PC-3 (cell line): ENCODE measurements at regions of chr1 and their contacts with region 1.

Region 1: DNA sequence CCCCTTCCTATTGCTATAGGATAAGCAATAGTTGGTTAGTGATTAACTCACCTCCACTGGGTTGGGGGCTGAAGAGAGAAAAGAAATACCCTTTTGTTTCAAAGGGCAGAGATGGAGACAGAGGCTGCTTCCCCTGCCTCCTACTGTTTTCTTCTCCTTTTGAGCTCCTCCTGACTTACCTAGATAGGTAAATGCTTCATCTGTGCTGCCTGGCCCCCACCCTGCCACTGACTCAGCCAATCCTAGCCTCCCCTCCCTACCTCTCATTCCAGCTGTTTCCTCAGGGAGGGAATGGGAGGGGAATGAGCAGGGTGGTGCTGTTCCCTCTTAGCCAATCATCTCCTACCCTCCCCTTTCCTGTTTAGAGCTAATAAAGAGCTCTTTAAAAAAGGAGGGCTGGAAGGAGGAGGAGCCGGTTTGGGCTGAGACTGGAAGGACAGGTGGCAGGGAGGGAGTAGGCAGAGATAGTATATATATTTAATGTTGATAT is at the start of gene C1orf116:
- DNase-seq: peak; percentile 99
- ATAC-seq: peak; percentile 63
- H3K4me3 ChIP-seq: peak within 1 kb of the TSS; percentile 69
- H3K27ac ChIP-seq: peak within 1 kb of the TSS; percentile 95
- H3K4me1 ChIP-seq: peaks cover 88% of the 10 kb centered on the region
- H3K27me3 ChIP-seq: no peaks in the 10 kb centered on the region
- CTCF ChIP-seq: no peak
- total RNA-seq, gene C1orf116: 34.9 and 36.2 TPM in 2 replicates

Region 2: DNA sequence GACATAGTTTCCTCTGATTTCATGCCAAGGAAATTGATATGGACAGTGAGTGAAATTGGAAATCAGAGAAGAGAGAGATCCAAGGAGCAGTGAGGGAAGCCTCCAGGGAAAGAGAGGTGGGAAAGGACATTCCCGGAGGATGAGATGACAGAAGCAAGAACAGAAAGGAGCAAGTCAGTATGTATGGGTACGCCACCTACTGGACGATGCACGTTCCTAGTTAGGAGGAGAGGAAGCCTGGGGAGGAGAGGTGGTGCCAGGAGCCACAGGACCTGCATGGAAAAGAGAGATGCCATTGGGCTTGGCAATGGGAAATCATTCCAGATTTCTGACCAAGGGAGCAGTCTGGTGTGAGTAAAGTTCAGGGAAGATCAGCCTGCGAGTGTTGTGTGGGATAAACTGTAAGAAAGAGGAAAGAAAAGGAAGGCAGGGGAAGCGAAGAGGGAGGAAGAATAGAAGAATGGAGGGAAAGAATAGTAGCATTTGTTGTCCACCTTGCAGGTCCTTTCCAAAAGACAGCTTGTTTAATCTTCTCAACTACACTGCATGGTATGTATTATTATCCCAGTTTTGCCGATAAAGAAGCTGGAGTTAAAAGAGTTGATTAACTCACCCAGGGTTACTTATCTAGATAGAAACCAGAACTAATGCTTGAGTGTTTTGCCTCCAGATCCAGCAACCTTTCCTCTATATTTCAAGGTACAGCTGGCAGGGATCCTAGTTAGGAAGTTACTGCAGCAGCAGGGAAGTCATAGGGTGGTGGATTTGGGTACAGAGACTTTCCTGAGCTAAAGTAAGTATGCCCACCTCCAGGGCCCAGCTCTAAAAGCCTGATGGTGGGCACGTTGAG is 27.4 kb before region 1 on chr1:
- CTCF ChIA-PET with region 1: interaction called, 9 read pairs
- POLR2A ChIA-PET with region 1: interaction called, 37 read pairs
- intact Hi-C with region 1: loop called (anchors 1 kb)
- DNase-seq: peak; percentile 97
- ATAC-seq: peak; percentile 33
- H3K4me3 ChIP-seq: no peak overlapping the region
- H3K27ac ChIP-seq: peak overlapping the region; percentile 92
- H3K4me1 ChIP-seq: peaks cover 82% of the 10 kb centered on the region
- H3K27me3 ChIP-seq: no peaks in the 10 kb centered on the region
- CTCF ChIP-seq: peak; percentile 98

Region 3: GRCh38 chr1:207047505-207047904 is 14.9 kb after region 1 on chr1:
- CTCF ChIA-PET with region 1: interaction called, 5 read pairs
- POLR2A ChIA-PET with region 1: interaction called, 81 read pairs
- intact Hi-C with region 1: loop called (anchors 1 kb)
- DNase-seq: peak; percentile 25
- ATAC-seq: no peak
- H3K4me3 ChIP-seq: peak overlapping the region; percentile 78
- H3K27ac ChIP-seq: 0 out of 2 replicates have a peak overlapping the region, but pooled peaks have one; percentile 0
- H3K4me1 ChIP-seq: peaks cover 67% of the 10 kb centered on the region
- H3K27me3 ChIP-seq: no peaks in the 10 kb centered on the region
- CTCF ChIP-seq: no peak

Region 4: DNA sequence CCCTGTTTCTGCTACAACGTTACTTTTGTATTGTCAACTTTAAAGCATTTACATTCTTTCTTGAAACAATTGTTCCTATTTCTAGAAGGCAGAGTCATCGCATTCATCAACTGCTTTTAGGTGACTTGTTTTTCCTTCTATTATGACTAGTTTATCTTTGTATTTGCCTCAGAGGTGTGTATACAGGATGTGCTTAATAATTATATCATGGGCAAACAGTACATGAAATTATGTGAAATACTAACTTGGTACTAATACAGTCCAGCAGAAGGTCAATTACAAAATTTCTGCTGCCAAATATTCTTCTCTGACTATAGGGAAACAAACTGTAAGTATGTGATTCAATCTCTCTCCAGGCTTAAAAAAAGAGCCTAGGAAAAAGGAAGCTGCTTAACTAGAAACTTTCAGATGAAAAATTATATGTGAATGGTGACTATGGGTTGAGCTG is 173.1 kb after region 1 on chr1:
- CTCF ChIA-PET with region 1: no interaction called
- POLR2A ChIA-PET with region 1: no interaction called
- intact Hi-C with region 1: no loop called
- DNase-seq: peak; percentile 31
- ATAC-seq: peak; percentile 30
- H3K4me3 ChIP-seq: no peak overlapping the region
- H3K27ac ChIP-seq: peak overlapping the region; percentile 74
- H3K4me1 ChIP-seq: peaks cover 14% of the 10 kb centered on the region
- H3K27me3 ChIP-seq: no peaks in the 10 kb centered on the region
- CTCF ChIP-seq: no peak

Region 5: GRCh38 chr1:207221934-207222351 is 189.4 kb after region 1 on chr1:
- CTCF ChIA-PET with region 1: no interaction called
- POLR2A ChIA-PET with region 1: no interaction called
- intact Hi-C with region 1: no loop called
- DNase-seq: peak; percentile 97
- ATAC-seq: peak; percentile 84
- H3K4me3 ChIP-seq: no peak overlapping the region
- H3K27ac ChIP-seq: peak overlapping the region; percentile 69
- H3K4me1 ChIP-seq: peaks cover 48% of the 10 kb centered on the region
- H3K27me3 ChIP-seq: no peaks in the 10 kb centered on the region
- CTCF ChIP-seq: no peak